K562 (cell line): ENCODE measurements at regions of chr12 and their contacts with region 1.

Region 1: DNA sequence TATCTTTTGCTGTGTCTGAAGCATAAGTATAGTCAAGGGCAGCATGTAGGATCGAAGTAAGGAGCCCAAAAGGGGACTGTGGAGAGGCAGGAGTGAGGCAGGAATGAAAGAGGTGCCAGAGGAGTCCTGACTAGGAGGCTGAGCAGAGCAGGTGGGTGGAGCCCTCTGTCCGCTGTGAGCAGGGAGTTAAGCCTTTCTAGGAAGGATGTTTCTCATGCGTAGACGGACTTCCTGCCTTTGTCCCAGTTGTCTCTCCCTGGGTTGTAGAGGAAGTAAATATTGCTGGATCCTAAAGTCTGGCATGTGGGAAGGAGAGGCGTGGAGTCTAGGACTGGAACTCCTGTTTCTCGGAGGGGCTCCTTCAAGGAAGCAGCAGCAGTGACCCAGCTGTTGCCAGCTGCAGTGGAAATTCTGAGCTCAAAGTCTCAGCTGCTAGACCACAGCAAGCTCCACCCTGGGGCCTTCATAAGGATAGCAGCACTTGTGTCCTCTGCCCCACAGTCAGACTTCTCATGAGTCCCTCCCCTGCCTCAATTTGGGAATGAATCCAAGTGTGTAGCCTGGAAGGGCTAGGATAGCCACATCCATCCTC is 44.0 kb downstream of the RBMS2 start:
- DNase-seq: peak; percentile 37 to 67 (median 55)
- ATAC-seq: peak; percentile 92
- H3K4me3 ChIP-seq: peak overlapping the region; percentile 16; the same call in 1 of the 2 replicates
- H3K27ac ChIP-seq: no peak overlapping the region
- H3K4me1 ChIP-seq: peaks cover 6 to 8% of the 10 kb centered on the region in 2 experiments; a peak in 4 of 5 replicates
- H3K27me3 ChIP-seq: peaks cover 7 to 8% of the 10 kb centered on the region in 2 experiments; a peak in 3 of 5 replicates
- CTCF ChIP-seq: no peak; a peak in 1 of 6 replicates
- EP300 ChIP-seq: no peak
- POLR2A ChIP-seq: no peak
- RAD21 ChIP-seq: peak; percentile 11 to 15; a peak in 2 of 4 replicates

Region 2: GRCh38 chr12:56014206-56014605 is 551.4 kb before region 1 on chr12:
- CTCF ChIA-PET with region 1: no interaction called
- POLR2A ChIA-PET with region 1: no interaction called
- in situ Hi-C with region 1: no loop called
- intact Hi-C with region 1: no loop called
- DNase-seq: no peak
- ATAC-seq: no peak
- H3K4me3 ChIP-seq: no peak overlapping the region
- H3K27ac ChIP-seq: no peak overlapping the region
- H3K4me1 ChIP-seq: peaks cover 0 to 38% of the 10 kb centered on the region in 2 experiments; a peak in 3 of 5 replicates
- H3K27me3 ChIP-seq: no peaks in the 10 kb centered on the region
- CTCF ChIP-seq: no peak
- EP300 ChIP-seq: no peak
- POLR2A ChIP-seq: no peak
- RAD21 ChIP-seq: no peak

Region 3: DNA sequence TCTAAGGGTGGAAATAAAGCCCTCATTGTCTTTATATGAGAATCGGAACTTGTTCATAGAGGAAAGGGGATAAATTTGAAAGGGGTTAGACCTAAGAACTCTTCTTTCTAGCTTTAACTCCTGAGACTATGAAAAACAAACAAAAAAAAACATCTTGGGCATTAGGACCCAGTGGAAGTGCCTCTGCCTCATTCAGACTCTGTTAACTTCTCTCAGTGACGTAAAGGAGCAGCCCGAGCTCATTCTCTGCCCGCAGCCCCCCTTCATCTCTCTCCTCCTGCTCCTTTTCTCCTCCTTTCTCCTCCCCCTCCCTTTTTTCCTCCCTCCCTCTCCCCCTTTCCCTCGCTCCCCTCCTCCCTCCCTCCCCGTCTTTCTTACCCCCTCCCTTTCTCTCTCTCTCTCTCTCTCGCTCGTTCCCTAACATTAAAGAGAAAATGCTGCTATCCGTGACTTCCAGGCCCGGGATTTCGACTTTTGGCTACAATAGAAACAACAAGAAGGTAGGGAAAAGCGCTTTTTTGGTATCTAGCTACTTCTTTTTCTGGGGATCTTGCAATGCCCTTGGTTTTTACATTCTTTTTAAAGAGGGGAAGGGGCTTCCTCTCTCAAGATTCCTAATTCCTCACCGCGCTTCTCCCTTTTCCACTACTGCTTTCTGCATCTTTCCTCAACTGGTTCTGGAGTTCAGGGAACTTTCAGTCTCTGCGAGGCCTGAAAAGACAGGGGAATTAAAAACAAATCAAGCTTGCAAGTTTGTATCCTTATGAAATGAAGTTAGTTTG is 43.8 kb before region 1 on chr12 and contains the start of gene RBMS2:
- CTCF ChIA-PET with region 1: no interaction called
- POLR2A ChIA-PET with region 1: interaction called, 3 read pairs
- in situ Hi-C with region 1: loop called (anchors 5 kb)
- intact Hi-C with region 1: no loop called
- DNase-seq: peak; percentile 36 to 58 (median 52)
- ATAC-seq: peak; percentile 95
- H3K4me3 ChIP-seq: peak within 1 kb of the TSS; percentile 24
- H3K27ac ChIP-seq: no peak within 1 kb of the TSS
- H3K4me1 ChIP-seq: peaks cover 3 to 7% of the 10 kb centered on the region in 2 experiments; a peak in 1 of 5 replicates
- H3K27me3 ChIP-seq: no peaks in the 10 kb centered on the region
- CTCF ChIP-seq: no peak
- EP300 ChIP-seq: no peak
- POLR2A ChIP-seq: no peak
- RAD21 ChIP-seq: no peak
- polyA plus RNA-seq, gene RBMS2: 0.08 to 0.31 TPM